Endothelial cell of umbilical vein (primary cell): ENCODE measurements at regions of chr11 and their contacts with region 1.

Region 1: DNA sequence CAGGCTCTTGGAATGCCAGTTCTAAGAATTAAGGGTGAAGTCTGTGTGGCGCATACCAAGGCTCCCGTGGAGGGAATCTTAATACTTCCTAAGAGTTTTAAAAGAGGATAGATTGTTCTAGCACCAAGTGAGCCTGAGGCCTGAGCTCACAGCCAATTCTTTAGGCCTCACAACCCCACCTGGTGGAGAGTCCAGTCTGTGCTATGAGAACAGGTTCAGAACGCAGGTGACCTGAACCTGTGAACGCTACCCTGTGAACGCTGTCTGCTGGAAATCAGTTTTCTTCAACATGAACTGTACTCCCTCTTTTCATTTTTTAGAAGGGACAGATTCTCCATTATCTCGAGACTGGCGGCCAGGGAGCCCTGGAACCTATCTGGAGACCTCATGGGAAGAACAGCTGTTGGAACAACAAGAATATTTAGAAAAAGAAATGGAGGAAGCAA is 43.2 kb upstream of the DLAT start:
- DNase-seq: peak; percentile 59
- H3K4me3 ChIP-seq: no peak overlapping the region
- H3K27ac ChIP-seq: no peak overlapping the region
- H3K4me1 ChIP-seq: peaks cover 16% of the 10 kb centered on the region
- H3K27me3 ChIP-seq: no peaks in the 10 kb centered on the region
- CTCF ChIP-seq: peak; percentile 55 to 73
- POLR2A ChIP-seq: no peak

Region 2: GRCh38 chr11:111870886-111871692 is 111.0 kb before region 1 on chr11 and contains the start of gene ALG9:
- CTCF ChIA-PET with region 1: interaction called, 23 read pairs
- POLR2A ChIA-PET with region 1: interaction called, 6 read pairs
- dilution Hi-C with region 1: no loop called
- intact Hi-C with region 1: no loop called
- DNase-seq: peak; percentile 87
- H3K4me3 ChIP-seq: peak within 1 kb of the TSS; percentile 72 to 93 (median 81)
- H3K27ac ChIP-seq: peak within 1 kb of the TSS; percentile 71
- H3K4me1 ChIP-seq: peaks cover 8% of the 10 kb centered on the region
- H3K27me3 ChIP-seq: no peaks in the 10 kb centered on the region
- CTCF ChIP-seq: peak; percentile 8 to 15
- POLR2A ChIP-seq: peak; percentile 92
- total RNA-seq, gene ALG9: 29.1 and 33.5 TPM in 2 replicates

Region 3: DNA sequence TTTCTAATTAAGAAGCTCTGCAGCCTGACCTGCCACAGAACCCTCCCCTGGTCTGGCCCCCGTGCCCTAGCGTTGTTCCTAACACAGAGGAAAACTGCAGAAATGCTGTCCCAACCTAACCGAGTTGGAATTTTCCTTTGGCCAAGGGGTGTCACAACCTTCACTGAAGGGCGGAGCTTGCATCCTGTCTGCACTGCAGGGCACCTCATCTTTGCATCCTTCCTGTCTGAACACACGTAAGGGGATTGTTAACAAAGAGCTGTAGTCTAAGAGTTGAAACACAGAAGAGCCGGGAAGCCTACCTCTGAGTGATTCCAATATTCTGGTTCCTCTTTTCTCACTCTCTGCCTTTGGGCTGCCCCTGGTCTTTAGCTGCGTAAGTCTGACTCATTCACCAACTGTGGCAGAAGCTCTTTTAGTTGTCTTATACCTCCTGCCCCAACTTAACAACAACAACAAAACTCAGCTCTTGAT is 43.3 kb before region 1 on chr11:
- CTCF ChIA-PET with region 1: interaction called, 407 read pairs
- POLR2A ChIA-PET with region 1: interaction called, 6 read pairs
- dilution Hi-C with region 1: no loop called
- intact Hi-C with region 1: loop called (anchors 1 kb)
- DNase-seq: peak; percentile 64
- H3K4me3 ChIP-seq: peak overlapping the region in 2 of 3 experiments; percentile 4 to 6
- H3K27ac ChIP-seq: peak overlapping the region; percentile 94
- H3K4me1 ChIP-seq: peaks cover 45% of the 10 kb centered on the region
- H3K27me3 ChIP-seq: no peaks in the 10 kb centered on the region
- CTCF ChIP-seq: no peak
- POLR2A ChIP-seq: no peak

Region 4: DNA sequence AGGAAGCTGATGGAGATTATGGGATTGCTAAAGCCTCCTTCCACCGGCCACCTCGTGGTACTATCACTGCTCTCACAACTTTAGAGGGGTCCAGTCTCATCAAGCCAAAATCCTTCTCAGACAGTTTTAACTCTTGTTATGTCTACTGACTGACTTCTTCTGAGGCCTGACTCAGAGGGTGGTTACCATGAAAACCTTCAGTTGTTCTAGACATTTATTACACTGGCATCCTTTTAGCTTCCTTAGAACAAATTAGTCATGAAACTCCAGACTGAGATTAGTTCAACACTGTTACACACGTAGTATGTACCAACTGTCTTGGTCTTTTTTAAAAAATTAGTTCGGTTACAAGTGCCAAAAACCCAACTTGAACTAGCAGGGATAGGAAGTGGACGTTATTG is 37.4 kb before region 1 on chr11:
- CTCF ChIA-PET with region 1: interaction called, 47 read pairs
- POLR2A ChIA-PET with region 1: no interaction called
- dilution Hi-C with region 1: no loop called
- intact Hi-C with region 1: no loop called
- DNase-seq: peak; percentile 96
- H3K4me3 ChIP-seq: no peak overlapping the region
- H3K27ac ChIP-seq: peak overlapping the region; percentile 89
- H3K4me1 ChIP-seq: peaks cover 48% of the 10 kb centered on the region
- H3K27me3 ChIP-seq: no peaks in the 10 kb centered on the region
- CTCF ChIP-seq: no peak
- POLR2A ChIP-seq: no peak

Region 5: DNA sequence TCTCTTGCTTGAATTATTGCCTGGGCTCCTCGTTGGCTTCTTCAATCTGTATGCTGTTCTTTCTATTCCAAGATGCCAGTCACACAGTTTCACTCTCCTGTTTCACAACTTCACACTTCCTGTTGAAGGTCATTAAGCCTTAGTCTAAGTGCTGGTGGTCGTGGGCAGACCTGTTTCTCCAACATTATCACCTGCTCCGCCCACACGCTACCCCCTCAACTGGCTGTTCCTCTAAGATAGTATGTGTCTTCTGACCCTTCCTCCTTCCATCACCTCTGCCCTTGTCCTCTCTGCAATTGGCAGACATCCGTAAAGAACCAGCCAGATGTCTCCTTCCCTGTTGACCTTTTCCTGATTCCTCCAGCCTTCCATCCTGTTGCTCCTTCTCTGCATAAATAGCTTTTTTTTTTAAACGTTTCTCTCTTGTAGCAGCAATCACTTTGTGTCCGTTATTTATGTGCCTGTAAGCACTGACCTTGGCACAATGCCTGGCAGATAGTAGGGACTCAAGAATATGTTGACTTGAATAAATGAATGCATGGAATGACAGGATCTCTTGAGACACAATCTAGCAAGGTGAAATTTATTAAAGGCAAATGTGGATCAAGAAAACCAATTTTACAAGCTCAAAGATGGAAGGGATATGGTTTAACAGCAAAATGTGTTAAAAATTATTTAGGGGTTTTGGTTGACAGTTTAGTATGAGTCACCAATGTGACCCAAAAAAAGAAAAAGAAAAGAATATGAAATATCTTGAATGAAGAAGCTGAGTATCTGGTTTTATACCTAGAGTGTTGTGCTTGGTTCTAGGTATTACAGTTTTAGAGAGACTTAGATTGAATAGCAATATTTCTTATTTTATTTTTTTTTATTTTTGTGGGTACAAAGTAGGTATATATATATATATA is 32.3 kb before region 1 on chr11:
- CTCF ChIA-PET with region 1: interaction called, 19 read pairs
- POLR2A ChIA-PET with region 1: no interaction called
- dilution Hi-C with region 1: no loop called
- intact Hi-C with region 1: no loop called
- DNase-seq: peak; percentile 85
- H3K4me3 ChIP-seq: no peak overlapping the region
- H3K27ac ChIP-seq: no peak overlapping the region
- H3K4me1 ChIP-seq: peaks cover 31% of the 10 kb centered on the region
- H3K27me3 ChIP-seq: no peaks in the 10 kb centered on the region
- CTCF ChIP-seq: no peak
- POLR2A ChIP-seq: no peak

Region 6: GRCh38 chr11:111960916-111961315 is 21.1 kb before region 1 on chr11:
- CTCF ChIA-PET with region 1: interaction called, 7 read pairs
- POLR2A ChIA-PET with region 1: interaction called, 5 read pairs
- dilution Hi-C with region 1: no loop called
- intact Hi-C with region 1: loop called (anchors 2 kb)
- DNase-seq: no peak
- H3K4me3 ChIP-seq: no peak overlapping the region
- H3K27ac ChIP-seq: no peak overlapping the region
- H3K4me1 ChIP-seq: peaks cover 12% of the 10 kb centered on the region
- H3K27me3 ChIP-seq: no peaks in the 10 kb centered on the region
- CTCF ChIP-seq: no peak
- POLR2A ChIP-seq: no peak

Region 7: GRCh38 chr11:112086422-112087191 is 104.6 kb after region 1 on chr11 and contains the starts of genes SDHD and TIMM8B:
- CTCF ChIA-PET with region 1: no interaction called
- POLR2A ChIA-PET with region 1: no interaction called
- dilution Hi-C with region 1: no loop called
- intact Hi-C with region 1: loop called (anchors 2 kb)
- DNase-seq: peak; percentile 98
- H3K4me3 ChIP-seq: peak within 1 kb of the TSS; percentile 54 to 90 (median 86)
- H3K27ac ChIP-seq: peak within 1 kb of the TSS; percentile 54
- H3K4me1 ChIP-seq: peaks cover 13% of the 10 kb centered on the region
- H3K27me3 ChIP-seq: no peaks in the 10 kb centered on the region
- CTCF ChIP-seq: peak; percentile 17 to 62
- POLR2A ChIP-seq: peak; percentile 52
- total RNA-seq, gene SDHD: 72.3 and 79.0 TPM in 2 replicates
- total RNA-seq, gene TIMM8B: 64.1 and 77.0 TPM in 2 replicates